IMR-90 (cell line): ENCODE measurements at regions of chr1 and their contacts with region 1.

Region 1: GRCh38 chr1:231827337-231828105 is 200.9 kb downstream of the DISC1 start:
- DNase-seq: peak; percentile 68
- ATAC-seq: peak; percentile 57
- H3K4me3 ChIP-seq: no peak overlapping the region
- H3K27ac ChIP-seq: peak overlapping the region; percentile 61
- H3K4me1 ChIP-seq: peaks cover 4% of the 10 kb centered on the region
- H3K27me3 ChIP-seq: no peaks in the 10 kb centered on the region
- CTCF ChIP-seq: no peak
- POLR2A ChIP-seq: no peak
- RAD21 ChIP-seq: no peak

Region 2: DNA sequence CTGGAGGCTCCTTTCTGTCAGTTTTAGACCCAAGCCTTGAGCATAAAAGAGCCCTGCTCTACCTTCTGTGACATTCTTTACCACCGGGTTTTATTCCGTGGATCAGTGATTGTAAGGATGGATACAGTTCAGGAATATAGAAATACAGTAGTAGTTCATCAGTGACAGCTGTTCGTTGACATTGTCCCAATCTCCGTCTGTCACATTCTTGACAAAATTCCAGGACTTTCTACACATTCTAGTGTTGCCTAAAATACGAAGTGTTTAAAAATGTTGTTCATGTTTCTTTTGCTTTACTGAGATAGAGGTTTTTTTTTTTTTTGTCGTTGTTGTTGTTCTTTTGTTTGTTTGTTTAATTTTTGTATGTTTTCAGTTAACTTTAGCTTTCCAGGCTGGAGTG is 1007.6 kb after region 1 on chr1:
- CTCF ChIA-PET with region 1: no interaction called
- POLR2A ChIA-PET with region 1: interaction called, 14 read pairs
- dilution Hi-C with region 1: no loop called
- in situ Hi-C with region 1: no loop called
- intact Hi-C with region 1: no loop called
- DNase-seq: no peak
- ATAC-seq: no peak
- H3K4me3 ChIP-seq: no peak overlapping the region
- H3K27ac ChIP-seq: no peak overlapping the region
- H3K4me1 ChIP-seq: no peaks in the 10 kb centered on the region
- H3K27me3 ChIP-seq: no peaks in the 10 kb centered on the region
- CTCF ChIP-seq: no peak
- POLR2A ChIP-seq: no peak
- RAD21 ChIP-seq: no peak